PC-9 (cell line): ENCODE measurements at regions of chr2 and their contacts with region 1.

Region 1: GRCh38 chr2:211408516-211408915 is 852.1 kb downstream of the CPS1 start:
- DNase-seq: peak; percentile 33 to 94
- H3K4me3 ChIP-seq: no peak overlapping the region
- H3K27ac ChIP-seq: peak overlapping the region; percentile 24; the same call in 1 of the 2 replicates
- H3K4me1 ChIP-seq: peaks cover 5% of the 10 kb centered on the region; the same call in 1 of the 2 replicates
- H3K27me3 ChIP-seq: no peaks in the 10 kb centered on the region
- CTCF ChIP-seq: no peak

Region 2: GRCh38 chr2:211354481-211354880 is 54.0 kb before region 1 on chr2:
- CTCF ChIA-PET with region 1: no interaction called
- POLR2A ChIA-PET with region 1: no interaction called
- intact Hi-C with region 1: loop called (anchors 2 kb)
- DNase-seq: no peak
- H3K4me3 ChIP-seq: no peak overlapping the region
- H3K27ac ChIP-seq: no peak overlapping the region
- H3K4me1 ChIP-seq: no peaks in the 10 kb centered on the region
- H3K27me3 ChIP-seq: no peaks in the 10 kb centered on the region
- CTCF ChIP-seq: no peak

Region 3: GRCh38 chr2:211617803-211618202 is 209.3 kb after region 1 on chr2:
- CTCF ChIA-PET with region 1: no interaction called
- POLR2A ChIA-PET with region 1: no interaction called
- intact Hi-C with region 1: no loop called
- DNase-seq: no peak
- H3K4me3 ChIP-seq: no peak overlapping the region
- H3K27ac ChIP-seq: no peak overlapping the region
- H3K4me1 ChIP-seq: no peaks in the 10 kb centered on the region
- H3K27me3 ChIP-seq: no peaks in the 10 kb centered on the region
- CTCF ChIP-seq: no peak